ENCODE measurements at regions of chr11 and their contacts with region 1.

Region 1: DNA sequence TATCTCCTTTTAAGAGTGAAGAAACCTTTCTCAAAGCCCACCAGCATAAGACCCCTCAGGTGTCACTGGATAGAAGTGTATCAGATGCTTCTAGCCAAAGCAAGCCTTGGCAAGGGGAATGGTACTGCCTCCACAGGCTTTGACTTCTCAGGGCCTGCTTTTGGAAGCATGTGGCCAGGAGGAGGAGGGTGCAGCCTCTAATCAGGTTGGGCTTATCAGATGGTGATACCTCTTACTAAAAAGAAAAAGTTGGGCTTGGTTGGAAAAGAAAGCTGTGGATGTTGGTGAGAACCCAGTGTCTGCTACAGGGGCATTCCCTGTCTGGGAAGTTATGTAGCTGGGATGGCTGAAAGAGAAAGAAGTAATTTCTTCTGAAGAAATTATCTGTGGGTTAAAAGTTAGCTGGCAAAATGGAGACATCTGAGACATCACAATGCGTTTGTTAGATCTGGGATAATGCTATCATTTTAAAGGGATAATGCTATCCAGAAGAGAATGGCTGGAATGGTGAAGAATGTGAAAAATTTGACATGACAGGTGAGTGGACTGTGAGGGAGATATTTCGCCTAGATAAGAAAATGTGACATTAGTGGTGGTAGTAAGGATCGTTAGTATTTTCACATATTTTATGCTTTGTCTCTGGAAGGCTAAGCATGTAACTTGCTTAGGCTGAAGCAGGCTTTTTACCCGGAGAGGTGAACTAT is 7.2 kb downstream of the APLP2 start:
- DNase-seq: no peak
- H3K4me3 Mint-ChIP-seq: no peak overlapping the region
- H3K27ac Mint-ChIP-seq: peak overlapping the region; percentile 80
- H3K4me1 Mint-ChIP-seq: peaks cover 34% of the 10 kb centered on the region
- H3K27me3 Mint-ChIP-seq: no peaks in the 10 kb centered on the region
- CTCF ChIP-seq: no peak

Region 2: GRCh38 chr11:130087294-130087926 is 10.5 kb after region 1 on chr11:
- CTCF ChIA-PET with region 1: interaction called, 3 read pairs
- POLR2A ChIA-PET with region 1: interaction called, 66 read pairs
- intact Hi-C with region 1: no loop called
- DNase-seq: no peak
- H3K4me3 Mint-ChIP-seq: no peak overlapping the region
- H3K27ac Mint-ChIP-seq: no peak overlapping the region
- H3K4me1 Mint-ChIP-seq: peaks cover 24% of the 10 kb centered on the region
- H3K27me3 Mint-ChIP-seq: no peaks in the 10 kb centered on the region
- CTCF ChIP-seq: no peak

Measured in MCF 10A (cell line).